K562 (cell line): ENCODE measurements at regions of chr17 and their contacts with region 1.

Region 1: GRCh38 chr17:81471804-81472456 is 40.7 kb downstream of the ACTG1 start:
- DNase-seq: peak; percentile 95 to 99 (median 98)
- ATAC-seq: peak; percentile 99
- H3K4me3 ChIP-seq: peak overlapping the region; percentile 19; the same call in 1 of the 2 replicates
- H3K27ac ChIP-seq: peak overlapping the region; percentile 81
- H3K4me1 ChIP-seq: peaks cover 0 to 45% of the 10 kb centered on the region in 2 experiments; a peak in 3 of 5 replicates
- H3K27me3 ChIP-seq: no peaks in the 10 kb centered on the region
- CTCF ChIP-seq: peak; percentile 55 to 56 (median 55); a peak in 4 of 6 replicates
- EP300 ChIP-seq: no peak
- POLR2A ChIP-seq: peak; percentile 73
- RAD21 ChIP-seq: peak; percentile 90

Region 2: GRCh38 chr17:81460856-81461460 is 11.0 kb before region 1 on chr17:
- CTCF ChIA-PET with region 1: no interaction called
- POLR2A ChIA-PET with region 1: interaction called, 16 read pairs
- in situ Hi-C with region 1: no loop called
- intact Hi-C with region 1: no loop called
- DNase-seq: peak; percentile 71 to 88 (median 84)
- ATAC-seq: peak; percentile 93
- H3K4me3 ChIP-seq: no peak overlapping the region
- H3K27ac ChIP-seq: peak overlapping the region; percentile 40; the same call in 1 of the 3 replicates
- H3K4me1 ChIP-seq: peaks cover 18 to 89% of the 10 kb centered on the region in 2 experiments
- H3K27me3 ChIP-seq: no peaks in the 10 kb centered on the region
- CTCF ChIP-seq: no peak
- EP300 ChIP-seq: no peak
- POLR2A ChIP-seq: no peak
- RAD21 ChIP-seq: no peak

Region 3: DNA sequence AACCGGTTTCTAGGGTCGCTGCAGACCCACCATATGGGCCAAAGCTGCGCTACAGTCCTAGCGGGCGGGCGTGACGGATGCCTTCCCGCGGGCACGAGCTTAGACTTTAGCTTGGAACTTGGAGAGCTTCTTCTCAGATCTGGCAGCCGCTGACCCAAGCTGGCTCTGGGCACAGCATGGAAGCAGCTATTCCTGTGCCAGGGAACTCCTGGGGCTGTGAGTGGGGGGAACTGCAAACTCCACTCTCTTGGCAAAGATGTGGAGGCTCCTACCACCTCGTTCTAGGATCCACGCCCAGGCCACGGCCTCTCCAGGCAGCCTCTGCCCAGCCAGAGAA is 71.4 kb after region 1 on chr17:
- CTCF ChIA-PET with region 1: no interaction called
- POLR2A ChIA-PET with region 1: no interaction called
- in situ Hi-C with region 1: no loop called
- intact Hi-C with region 1: no loop called
- DNase-seq: no peak
- ATAC-seq: no peak
- H3K4me3 ChIP-seq: no peak overlapping the region
- H3K27ac ChIP-seq: no peak overlapping the region
- H3K4me1 ChIP-seq: peaks cover 0 to 43% of the 10 kb centered on the region in 2 experiments; a peak in 1 of 5 replicates
- H3K27me3 ChIP-seq: no peaks in the 10 kb centered on the region
- CTCF ChIP-seq: no peak
- EP300 ChIP-seq: no peak
- POLR2A ChIP-seq: no peak
- RAD21 ChIP-seq: no peak